Common myeloid progenitor, CD34-positive (primary cell): ENCODE measurements at regions of chr11 and their contacts with region 1.

Region 1: DNA sequence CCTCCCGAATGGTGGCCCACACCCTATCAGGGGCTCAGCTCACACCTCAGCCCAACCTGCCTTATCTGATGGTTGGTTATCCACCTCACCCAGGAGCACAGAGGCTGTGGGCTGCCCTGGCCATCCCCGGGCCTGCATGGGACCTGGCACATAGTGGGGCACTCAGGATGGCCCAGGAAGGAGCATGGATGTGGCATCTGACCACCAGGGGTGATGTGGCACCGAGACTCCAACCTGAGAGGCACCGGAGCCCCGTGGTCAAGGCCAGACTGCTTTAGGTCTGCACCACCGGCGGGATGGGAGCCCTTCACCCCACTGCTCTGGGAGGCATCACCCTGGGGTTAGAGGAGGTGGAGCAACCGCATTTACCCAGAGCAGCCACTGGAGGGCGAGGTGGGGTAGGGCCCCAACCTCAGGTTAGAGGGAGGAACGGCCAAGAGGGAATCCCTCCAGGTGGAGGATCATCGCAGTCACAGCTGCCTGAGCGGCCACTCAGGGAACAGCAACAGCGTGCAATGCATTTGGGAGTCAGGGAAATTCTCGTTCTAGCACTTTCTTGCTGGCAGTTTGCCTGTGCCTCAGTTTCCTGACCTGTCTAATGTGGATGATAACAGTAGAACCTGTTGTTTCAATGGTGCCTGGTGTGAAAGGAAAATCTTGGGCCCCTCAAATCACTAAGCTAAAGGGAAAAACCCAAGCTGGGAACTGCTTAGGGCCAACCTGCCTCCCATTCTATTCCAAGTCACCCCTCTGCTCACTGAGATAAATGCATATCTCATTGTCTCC is 52.9 kb upstream of the CARS1 start:
- DNase-seq: peak; percentile 44 to 64 (median 60)
- H3K4me3 ChIP-seq: no peak overlapping the region
- H3K27ac ChIP-seq: no peak overlapping the region
- H3K4me1 ChIP-seq: peaks cover 0 to 10% (median 3%) of the 10 kb centered on the region in 4 experiments
- H3K27me3 ChIP-seq: no peaks in the 10 kb centered on the region

Region 2: DNA sequence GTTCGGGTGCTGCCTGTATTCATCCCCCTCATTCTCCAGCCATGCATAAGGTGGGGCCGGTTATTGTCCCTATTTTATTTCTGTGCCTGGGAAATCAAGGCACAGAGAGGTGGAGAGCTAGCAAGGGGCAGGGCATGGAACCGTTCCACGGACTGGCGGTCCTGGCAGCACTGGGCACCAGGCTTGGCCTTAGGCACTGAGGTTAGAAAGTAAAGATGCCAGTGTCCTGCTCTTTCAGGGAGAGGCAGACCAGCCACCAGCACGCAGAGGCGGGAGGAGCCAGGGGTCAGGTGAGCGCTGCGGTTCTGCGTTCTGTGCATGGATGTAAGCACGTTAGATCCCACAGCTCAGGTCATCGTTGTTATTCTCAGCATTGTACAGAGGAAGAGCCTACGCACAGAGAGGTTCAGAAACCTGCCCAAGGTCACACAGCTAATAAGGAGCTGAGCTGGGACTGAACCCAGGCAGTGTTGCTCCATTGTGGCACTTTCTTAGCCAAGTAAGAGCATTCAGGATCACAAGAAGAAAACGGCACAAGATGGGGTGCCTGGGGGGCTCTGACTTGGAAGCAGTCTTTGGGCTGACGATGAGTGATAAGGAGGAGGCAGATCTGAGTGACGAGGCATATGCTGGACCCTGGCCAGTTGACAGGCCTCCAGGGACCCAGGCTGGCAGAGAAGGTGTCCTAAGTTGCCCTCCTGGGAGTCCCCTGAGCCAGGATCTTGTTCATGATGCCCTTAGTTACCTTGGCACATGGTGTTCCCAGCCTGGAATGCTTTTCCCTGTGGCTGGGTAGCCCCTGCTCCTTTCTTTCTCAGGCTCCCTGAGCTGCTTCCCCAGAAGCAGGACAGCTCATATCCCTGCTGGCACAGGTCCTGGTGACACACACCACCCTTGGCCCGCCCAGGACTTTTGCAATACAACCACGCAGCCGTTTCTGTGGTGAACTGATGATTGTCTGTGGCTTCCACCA is 13.9 kb after region 1 on chr11:
- CTCF ChIA-PET with region 1: interaction called, 23 read pairs
- POLR2A ChIA-PET with region 1: interaction called, 3 read pairs
- DNase-seq: peak; percentile 34 to 63 (median 61)
- H3K4me3 ChIP-seq: no peak overlapping the region
- H3K27ac ChIP-seq: no peak overlapping the region
- H3K4me1 ChIP-seq: peaks cover 0 to 17% (median 12%) of the 10 kb centered on the region in 4 experiments
- H3K27me3 ChIP-seq: no peaks in the 10 kb centered on the region

Region 3: GRCh38 chr11:3205261-3206135 is 95.4 kb after region 1 on chr11:
- CTCF ChIA-PET with region 1: interaction called, 10 read pairs
- POLR2A ChIA-PET with region 1: no interaction called
- DNase-seq: no peak
- H3K4me3 ChIP-seq: no peak overlapping the region
- H3K27ac ChIP-seq: no peak overlapping the region
- H3K4me1 ChIP-seq: peaks cover 0 to 16% (median 13%) of the 10 kb centered on the region in 4 experiments
- H3K27me3 ChIP-seq: peaks cover 0 to 47% (median 11%) of the 10 kb centered on the region in 5 experiments

Region 4: DNA sequence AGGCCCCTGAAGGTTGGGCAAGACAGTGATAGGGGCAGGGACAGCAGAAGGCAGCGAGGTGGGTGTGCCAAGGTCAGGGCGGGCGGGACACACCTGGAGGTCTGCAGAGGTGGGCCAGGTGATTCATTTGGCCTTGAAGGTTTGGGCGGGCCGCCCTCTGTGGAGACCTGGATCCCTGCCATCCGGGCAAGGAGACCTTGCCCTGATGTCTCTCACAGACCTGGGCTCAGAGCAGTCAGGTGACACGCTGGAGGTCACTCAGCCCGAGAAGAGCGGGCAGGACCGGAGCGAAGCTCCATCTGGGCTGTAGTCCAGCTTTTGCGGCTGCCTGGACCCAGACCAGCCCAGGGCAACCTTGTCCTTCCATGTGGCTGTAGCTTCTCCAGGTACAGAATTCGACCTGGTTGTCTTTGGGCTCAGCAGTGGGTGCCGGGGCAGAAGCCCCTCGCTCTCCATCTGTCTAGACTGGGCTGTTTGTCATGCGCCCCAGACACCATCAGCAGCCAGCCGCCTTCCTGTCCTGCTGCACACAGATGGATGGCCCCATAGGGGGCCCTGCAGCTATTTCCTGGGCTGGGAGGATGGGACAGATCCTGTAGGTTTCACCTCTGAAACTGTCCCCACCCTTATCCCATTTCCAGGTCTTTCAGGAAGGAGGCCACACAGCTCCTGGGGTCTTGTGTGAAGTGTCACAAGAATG is 105.4 kb after region 1 on chr11:
- CTCF ChIA-PET with region 1: interaction called, 32 read pairs
- POLR2A ChIA-PET with region 1: no interaction called
- DNase-seq: no peak
- H3K4me3 ChIP-seq: no peak overlapping the region
- H3K27ac ChIP-seq: no peak overlapping the region
- H3K4me1 ChIP-seq: peaks cover 0 to 2% (median 0%) of the 10 kb centered on the region in 4 experiments
- H3K27me3 ChIP-seq: no peaks in the 10 kb centered on the region

Region 5: GRCh38 chr11:3220521-3221407 is 110.7 kb after region 1 on chr11:
- CTCF ChIA-PET with region 1: interaction called, 32 read pairs
- POLR2A ChIA-PET with region 1: no interaction called
- DNase-seq: no peak
- H3K4me3 ChIP-seq: no peak overlapping the region
- H3K27ac ChIP-seq: no peak overlapping the region
- H3K4me1 ChIP-seq: peaks cover 0 to 23% (median 11%) of the 10 kb centered on the region in 4 experiments
- H3K27me3 ChIP-seq: no peaks in the 10 kb centered on the region

Region 6: DNA sequence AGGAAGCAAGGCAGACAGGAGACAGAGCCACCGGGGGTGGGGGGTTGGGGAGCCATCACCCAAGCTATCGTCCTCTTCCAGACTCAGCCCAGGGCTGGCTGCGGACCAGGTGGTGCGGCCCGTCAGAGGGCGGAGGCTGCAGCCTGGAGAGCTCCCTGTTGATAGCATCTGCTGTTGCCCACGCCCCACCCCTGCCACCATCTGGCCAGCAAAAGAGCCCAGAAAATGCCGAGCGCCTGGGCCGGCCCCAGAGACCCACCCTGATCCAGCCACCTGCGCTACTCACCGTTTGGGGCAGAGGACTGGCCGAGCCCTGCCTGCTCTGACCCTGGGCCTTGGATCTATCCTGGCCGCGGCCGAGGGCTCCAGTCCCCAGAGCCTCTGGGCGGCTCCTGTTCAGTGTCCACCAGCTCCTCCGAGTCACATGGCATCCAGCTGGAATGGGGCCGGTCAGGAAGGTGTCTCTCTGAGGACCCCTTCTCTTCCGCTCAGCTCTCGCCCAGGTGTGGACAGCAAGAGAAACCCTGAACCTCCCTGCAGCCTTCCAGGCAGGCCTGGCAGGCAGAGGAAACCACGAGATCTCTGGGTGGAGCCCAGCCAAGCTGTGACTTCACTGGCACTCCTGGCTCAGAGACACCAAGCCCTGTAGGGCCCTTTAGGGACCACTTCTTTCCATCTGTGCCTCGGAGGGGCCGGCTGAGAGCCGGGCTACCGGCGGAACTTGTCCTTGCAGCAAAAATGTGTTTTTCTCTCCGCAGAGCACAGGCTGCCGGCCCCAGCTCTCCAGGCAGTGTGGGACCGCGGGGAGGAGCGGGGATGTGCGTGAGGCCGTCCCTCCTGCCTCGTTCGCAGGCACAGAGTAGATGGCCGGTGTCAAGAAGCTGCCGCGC is 122.0 kb after region 1 on chr11 and contains the start of gene MRGPRE:
- CTCF ChIA-PET with region 1: no interaction called
- POLR2A ChIA-PET with region 1: no interaction called
- DNase-seq: peak in 1 of 3 donors; percentile 16
- H3K4me3 ChIP-seq: no peak within 1 kb of the TSS
- H3K27ac ChIP-seq: no peak within 1 kb of the TSS
- H3K4me1 ChIP-seq: peaks cover 0 to 2% (median 0%) of the 10 kb centered on the region in 4 experiments
- H3K27me3 ChIP-seq: no peaks in the 10 kb centered on the region